Kidney (tissue), 22 donors: ENCODE measurements at regions of chr2 and their contacts with region 1.

Region 1: DNA sequence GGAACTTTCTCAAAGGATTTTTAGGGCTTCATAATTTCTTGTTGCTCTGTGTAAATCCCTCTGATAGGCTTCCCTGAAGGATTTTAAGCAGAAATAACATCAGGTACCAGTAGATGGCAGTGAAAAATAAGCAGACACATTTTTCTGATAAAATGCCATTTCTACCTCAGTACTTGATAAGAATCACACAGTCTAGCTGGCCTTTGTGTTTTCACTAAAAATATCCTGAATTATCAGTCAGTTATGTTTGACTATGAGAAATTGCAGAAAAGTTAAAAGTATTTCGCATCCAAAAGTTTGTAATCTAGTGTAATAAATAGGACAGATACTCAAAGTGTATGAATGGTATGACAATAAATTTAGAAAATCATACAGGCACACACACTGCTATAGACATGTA is 68.7 kb downstream of the DNAJC10 start:
- DNase-seq: peak in 2 of 5 donors; percentile 64 to 68
- H3K4me3 ChIP-seq: no peak overlapping the region
- H3K27ac ChIP-seq: no peak overlapping the region
- H3K4me1 ChIP-seq: no peaks in the 10 kb centered on the region
- H3K27me3 ChIP-seq: no peaks in the 10 kb centered on the region
- CTCF ChIP-seq: peak; percentile 55

Region 2: DNA sequence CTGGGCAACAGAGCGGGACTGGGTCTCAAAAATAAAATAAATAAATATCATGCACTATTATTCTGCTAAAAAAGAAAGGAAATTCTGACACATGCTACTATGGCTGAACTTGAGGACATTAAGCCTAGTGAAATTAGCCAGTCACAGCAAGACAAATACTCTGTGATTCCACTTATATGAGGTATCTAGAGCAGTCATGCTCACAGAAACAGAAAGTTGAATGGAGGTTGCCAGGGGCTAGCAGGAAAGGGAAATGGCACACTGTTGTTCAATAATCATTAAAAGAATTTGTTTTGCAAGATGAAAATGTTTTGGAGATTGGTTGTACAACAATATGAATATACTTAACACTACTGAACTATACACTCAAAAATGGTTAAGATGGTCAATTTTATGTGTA is 192.7 kb after region 1 on chr2:
- intact Hi-C with region 1: loop called (anchors 10 kb)
- DNase-seq: no peak
- H3K4me3 ChIP-seq: no peak overlapping the region
- H3K27ac ChIP-seq: no peak overlapping the region
- H3K4me1 ChIP-seq: no peaks in the 10 kb centered on the region
- H3K27me3 ChIP-seq: no peaks in the 10 kb centered on the region
- CTCF ChIP-seq: no peak